Brain microvascular endothelial cell (primary cell): ENCODE measurements at regions of chr7 and their contacts with region 1.

Region 1: GRCh38 chr7:107462740-107463444 is 7.0 kb upstream of the GPR22 start:
- DNase-seq: peak; percentile 63
- H3K4me3 ChIP-seq: no peak overlapping the region
- H3K27ac ChIP-seq: no peak overlapping the region
- H3K27me3 ChIP-seq: no peaks in the 10 kb centered on the region
- CTCF ChIP-seq: peak; percentile 92

Region 2: DNA sequence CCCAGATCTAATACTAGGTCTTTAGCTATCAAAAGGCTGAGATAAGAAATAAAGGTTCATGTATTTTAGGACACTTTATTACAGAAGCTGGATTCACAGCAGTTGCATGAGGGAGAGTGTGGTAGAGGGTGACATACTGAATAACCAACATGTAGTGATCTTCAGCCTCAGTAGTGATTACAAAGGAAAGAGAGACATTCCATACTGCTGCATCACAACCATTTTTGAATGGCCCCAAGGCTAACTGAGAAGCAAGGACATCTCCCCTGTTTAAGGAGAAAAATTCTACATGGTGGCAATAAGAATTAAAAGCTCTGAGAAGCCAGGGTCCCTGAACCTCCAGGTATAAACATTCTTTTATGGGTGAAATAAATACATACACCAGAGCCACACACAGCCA is 65.6 kb after region 1 on chr7:
- in situ Hi-C with region 1: no loop called
- DNase-seq: peak; percentile 63
- H3K4me3 ChIP-seq: no peak overlapping the region
- H3K27ac ChIP-seq: no peak overlapping the region
- H3K27me3 ChIP-seq: no peaks in the 10 kb centered on the region
- CTCF ChIP-seq: no peak

Region 3: DNA sequence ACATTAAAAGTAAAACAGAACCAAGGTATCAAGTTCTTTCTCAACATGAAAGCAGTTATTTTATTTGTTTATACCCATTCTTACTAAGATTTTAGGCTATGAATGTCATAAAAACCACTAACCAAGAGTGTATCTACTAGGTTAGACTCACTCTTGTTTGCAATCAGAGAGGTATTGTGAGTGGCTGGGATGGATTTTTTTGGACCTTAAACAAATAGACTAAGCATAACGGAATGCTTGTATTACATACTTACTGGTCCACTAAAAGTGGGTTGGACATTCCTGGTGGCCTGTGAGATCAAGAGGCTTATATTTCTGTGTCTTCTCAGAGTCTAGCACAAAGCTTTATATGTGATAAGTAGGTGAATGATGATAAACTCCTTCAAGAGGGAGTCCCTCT is 248.4 kb after region 1 on chr7:
- in situ Hi-C with region 1: loop called (anchors 25 kb)
- DNase-seq: peak; percentile 73
- H3K4me3 ChIP-seq: no peak overlapping the region
- H3K27ac ChIP-seq: no peak overlapping the region
- H3K27me3 ChIP-seq: no peaks in the 10 kb centered on the region
- CTCF ChIP-seq: no peak